Endothelial cell of umbilical vein (primary cell): ENCODE measurements at regions of chr3 and their contacts with region 1.

Region 1: GRCh38 chr3:102229062-102229655 is 205.7 kb upstream of the ZPLD1 start:
- DNase-seq: peak; percentile 83
- H3K4me3 ChIP-seq: no peak overlapping the region
- H3K27ac ChIP-seq: no peak overlapping the region
- H3K4me1 ChIP-seq: no peaks in the 10 kb centered on the region
- H3K27me3 ChIP-seq: peaks cover 10 to 13% of the 10 kb centered on the region in 2 experiments
- CTCF ChIP-seq: peak; percentile 83 to 89
- POLR2A ChIP-seq: no peak

Region 2: GRCh38 chr3:101695779-101696372 is 533.3 kb before region 1 on chr3:
- CTCF ChIA-PET with region 1: interaction called, 6 read pairs
- POLR2A ChIA-PET with region 1: no interaction called
- dilution Hi-C with region 1: no loop called
- intact Hi-C with region 1: loop called (anchors 1 kb)
- DNase-seq: peak; percentile 68
- H3K4me3 ChIP-seq: no peak overlapping the region
- H3K27ac ChIP-seq: no peak overlapping the region
- H3K4me1 ChIP-seq: no peaks in the 10 kb centered on the region
- H3K27me3 ChIP-seq: no peaks in the 10 kb centered on the region
- CTCF ChIP-seq: peak; percentile 50 to 52
- POLR2A ChIP-seq: no peak

Region 3: GRCh38 chr3:101849051-101849720 is 380.0 kb before region 1 on chr3 and contains the start of gene NFKBIZ:
- CTCF ChIA-PET with region 1: interaction called, 39 read pairs
- POLR2A ChIA-PET with region 1: interaction called, 21 read pairs
- dilution Hi-C with region 1: no loop called
- intact Hi-C with region 1: loop called (anchors 1 kb)
- DNase-seq: peak; percentile 94
- H3K4me3 ChIP-seq: peak within 1 kb of the TSS; percentile 88 to 99 (median 90)
- H3K27ac ChIP-seq: peak within 1 kb of the TSS; percentile 88
- H3K4me1 ChIP-seq: peaks cover 17% of the 10 kb centered on the region
- H3K27me3 ChIP-seq: no peaks in the 10 kb centered on the region
- CTCF ChIP-seq: no peak
- POLR2A ChIP-seq: peak; percentile 99
- total RNA-seq, gene NFKBIZ: 27.4 and 28.9 TPM in 2 replicates

Region 4: DNA sequence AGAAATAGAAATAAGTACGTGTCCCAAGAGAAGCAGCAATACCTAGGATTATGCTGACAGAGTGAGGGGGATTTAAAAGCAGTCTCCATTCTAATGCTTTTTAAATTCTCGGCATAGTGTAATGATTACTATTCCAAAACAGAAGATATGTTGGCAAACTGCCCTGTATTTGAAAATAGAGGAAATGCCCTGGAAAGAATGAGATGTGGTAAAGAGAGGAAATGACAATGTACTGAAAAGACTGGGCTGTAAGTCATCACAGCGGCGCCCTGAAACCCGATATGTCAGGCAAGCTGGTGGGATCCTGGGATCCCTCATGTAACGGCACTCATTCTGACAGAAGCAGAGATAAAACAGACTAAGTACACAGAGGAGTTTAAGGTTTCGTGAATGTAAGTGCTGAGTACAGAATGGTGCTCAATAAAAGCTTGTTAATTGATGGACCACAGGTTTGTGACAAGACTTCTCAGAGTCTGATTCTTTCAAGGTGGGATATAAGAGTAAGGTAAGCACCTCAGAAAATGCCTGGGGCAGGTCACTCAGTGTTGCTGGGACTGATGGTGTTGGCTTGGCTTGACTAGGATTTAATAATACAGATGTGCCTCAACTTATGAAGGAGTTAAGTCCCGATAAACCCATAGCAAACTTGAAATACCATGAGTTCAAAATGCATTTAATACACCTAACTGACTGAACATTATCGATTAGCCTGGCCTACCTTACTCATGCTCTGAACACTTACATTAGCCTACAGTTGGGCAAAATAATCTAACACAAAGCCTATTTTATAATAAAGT is 288.4 kb before region 1 on chr3:
- CTCF ChIA-PET with region 1: interaction called, 14 read pairs
- POLR2A ChIA-PET with region 1: no interaction called
- dilution Hi-C with region 1: no loop called
- intact Hi-C with region 1: loop called (anchors 2 kb)
- DNase-seq: peak; percentile 94
- H3K4me3 ChIP-seq: peak overlapping the region in 1 of 3 experiments; percentile 46
- H3K27ac ChIP-seq: peak overlapping the region; percentile 88
- H3K4me1 ChIP-seq: peaks cover 51% of the 10 kb centered on the region
- H3K27me3 ChIP-seq: no peaks in the 10 kb centered on the region
- CTCF ChIP-seq: no peak
- POLR2A ChIP-seq: no peak

Region 5: GRCh38 chr3:102084006-102084405 is 145.2 kb before region 1 on chr3:
- CTCF ChIA-PET with region 1: interaction called, 14 read pairs
- POLR2A ChIA-PET with region 1: no interaction called
- dilution Hi-C with region 1: no loop called
- intact Hi-C with region 1: loop called (anchors 5 kb)
- DNase-seq: no peak
- H3K4me3 ChIP-seq: no peak overlapping the region
- H3K27ac ChIP-seq: no peak overlapping the region
- H3K4me1 ChIP-seq: peaks cover 24% of the 10 kb centered on the region
- H3K27me3 ChIP-seq: no peaks in the 10 kb centered on the region
- CTCF ChIP-seq: no peak
- POLR2A ChIP-seq: no peak

Region 6: GRCh38 chr3:102180291-102181039 is 48.7 kb before region 1 on chr3:
- CTCF ChIA-PET with region 1: interaction called, 57 read pairs
- POLR2A ChIA-PET with region 1: no interaction called
- dilution Hi-C with region 1: no loop called
- intact Hi-C with region 1: loop called (anchors 1 kb)
- DNase-seq: peak; percentile 94
- H3K4me3 ChIP-seq: peak overlapping the region in 1 of 3 experiments; percentile 7
- H3K27ac ChIP-seq: peak overlapping the region; percentile 97
- H3K4me1 ChIP-seq: peaks cover 64% of the 10 kb centered on the region
- H3K27me3 ChIP-seq: peaks cover 0 to 4% of the 10 kb centered on the region in 2 experiments
- CTCF ChIP-seq: no peak
- POLR2A ChIP-seq: no peak

Region 7: GRCh38 chr3:102673271-102674115 is 444.3 kb after region 1 on chr3:
- CTCF ChIA-PET with region 1: interaction called, 41 read pairs
- POLR2A ChIA-PET with region 1: no interaction called
- dilution Hi-C with region 1: no loop called
- intact Hi-C with region 1: loop called (anchors 10 kb)
- DNase-seq: peak; percentile 53
- H3K4me3 ChIP-seq: no peak overlapping the region
- H3K27ac ChIP-seq: no peak overlapping the region
- H3K4me1 ChIP-seq: no peaks in the 10 kb centered on the region
- H3K27me3 ChIP-seq: peaks cover 0 to 3% of the 10 kb centered on the region in 2 experiments
- CTCF ChIP-seq: peak; percentile 81
- POLR2A ChIP-seq: no peak

Region 8: GRCh38 chr3:103002425-103003176 is 773.4 kb after region 1 on chr3:
- CTCF ChIA-PET with region 1: no interaction called
- POLR2A ChIA-PET with region 1: no interaction called
- dilution Hi-C with region 1: no loop called
- intact Hi-C with region 1: no loop called
- DNase-seq: no peak
- H3K4me3 ChIP-seq: no peak overlapping the region
- H3K27ac ChIP-seq: no peak overlapping the region
- H3K4me1 ChIP-seq: no peaks in the 10 kb centered on the region
- H3K27me3 ChIP-seq: no peaks in the 10 kb centered on the region
- CTCF ChIP-seq: no peak
- POLR2A ChIP-seq: no peak